ENCODE measurements at regions of chr7 and their contacts with region 1.

Region 1: DNA sequence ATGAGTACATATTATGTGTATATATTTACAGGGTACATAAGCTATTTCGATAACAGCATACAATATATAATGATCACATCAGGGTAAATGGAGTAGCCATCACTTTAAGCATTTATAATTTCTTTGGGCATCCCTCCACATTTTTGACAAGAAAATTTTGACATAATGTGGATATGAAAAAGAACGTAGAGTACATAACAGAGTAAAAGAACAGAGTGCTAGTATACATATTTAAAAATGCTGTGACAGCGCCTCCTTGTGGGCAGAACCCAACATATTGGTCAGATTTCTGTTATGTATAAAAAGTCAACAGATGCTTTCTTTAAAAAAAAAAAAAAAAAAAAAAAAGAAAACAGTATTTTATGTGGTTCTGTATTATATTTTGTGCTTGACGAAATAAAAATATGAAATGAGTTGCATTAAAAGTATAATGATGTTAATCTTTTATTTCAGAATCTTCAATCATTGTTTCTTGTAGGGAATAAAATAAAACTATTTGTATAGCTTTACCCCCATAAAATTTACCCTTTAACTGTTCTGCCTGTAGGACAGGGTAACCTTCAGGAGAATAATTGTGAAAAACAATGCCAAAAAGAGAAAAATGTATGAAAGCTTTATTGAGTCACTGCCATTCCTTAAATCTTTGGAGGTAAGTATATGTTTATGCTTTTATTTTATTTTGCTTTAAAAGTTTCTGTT is 18.3 kb upstream of the HBP1 start:
- DNase-seq: peak; percentile 57
- H3K4me3 Mint-ChIP-seq: no peak overlapping the region
- H3K27ac Mint-ChIP-seq: no peak overlapping the region
- H3K4me1 Mint-ChIP-seq: no peaks in the 10 kb centered on the region
- H3K27me3 Mint-ChIP-seq: peaks cover 5% of the 10 kb centered on the region

Region 2: DNA sequence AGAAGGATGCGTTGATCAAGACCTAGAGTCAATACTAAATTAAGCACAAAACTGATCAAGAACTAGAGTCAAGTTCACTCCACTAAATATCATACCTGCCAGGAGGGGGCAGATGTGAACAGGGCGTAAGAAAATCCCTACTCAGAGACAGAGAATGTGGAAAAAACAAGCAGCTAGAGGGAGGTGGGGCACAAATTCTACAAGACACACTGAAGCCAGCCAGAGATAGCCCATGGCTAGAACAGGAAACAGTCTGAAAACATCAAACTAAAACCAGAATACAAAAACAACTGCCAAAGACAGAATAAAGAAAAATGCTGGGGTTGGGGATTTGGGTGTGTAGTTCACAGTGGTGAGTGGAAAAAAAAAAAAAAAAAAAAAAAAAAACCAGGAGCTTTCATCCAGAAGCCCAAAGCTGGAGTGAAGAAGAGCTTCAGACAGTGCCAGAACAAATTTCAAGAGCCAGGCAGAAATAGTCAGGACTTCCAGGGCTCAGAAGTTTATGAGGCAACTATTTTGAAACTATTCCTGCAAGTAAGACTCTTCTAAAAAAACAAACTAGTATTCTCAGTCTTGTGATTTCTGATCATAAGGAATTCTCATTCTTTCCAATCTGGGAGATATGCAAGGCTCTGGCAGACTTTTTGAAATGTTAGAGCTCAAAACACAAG is 607.8 kb before region 1 on chr7:
- intact Hi-C with region 1: loop called (anchors 5 kb)
- DNase-seq: no peak
- H3K4me3 Mint-ChIP-seq: no peak overlapping the region
- H3K27ac Mint-ChIP-seq: no peak overlapping the region
- H3K4me1 Mint-ChIP-seq: peaks cover 12% of the 10 kb centered on the region
- H3K27me3 Mint-ChIP-seq: no peaks in the 10 kb centered on the region

Region 3: GRCh38 chr7:106793015-106793975 is 357.2 kb before region 1 on chr7:
- intact Hi-C with region 1: loop called (anchors 1 kb)
- DNase-seq: no peak
- H3K4me3 Mint-ChIP-seq: no peak overlapping the region
- H3K27ac Mint-ChIP-seq: no peak overlapping the region
- H3K4me1 Mint-ChIP-seq: no peaks in the 10 kb centered on the region
- H3K27me3 Mint-ChIP-seq: no peaks in the 10 kb centered on the region

Region 4: GRCh38 chr7:107725151-107725740 is 574.7 kb after region 1 on chr7:
- intact Hi-C with region 1: loop called (anchors 1 kb)
- DNase-seq: peak; percentile 25
- H3K4me3 Mint-ChIP-seq: no peak overlapping the region
- H3K27ac Mint-ChIP-seq: no peak overlapping the region
- H3K4me1 Mint-ChIP-seq: no peaks in the 10 kb centered on the region
- H3K27me3 Mint-ChIP-seq: peaks cover 16% of the 10 kb centered on the region

Measured in activated T-helper 1 cell treated with anti-CD3 and anti-CD28 coated beads, Interleukin-12 subunit alpha, Interleukin-12 subunit beta, Interleukin-2, Interleukin-4 antibody, amounts not matched to agents 30 ng/mL and 10 ng/mL and 1 ng/mL, durations not matched to agents 14 hours and 24 hours and 36 hours (primary cell).